Calu3 (cell line): ENCODE measurements at regions of chr1 and their contacts with region 1.

Region 1: GRCh38 chr1:112809253-112809684 is 94.1 kb upstream of the PPM1J start:
- DNase-seq: peak; percentile 82
- H3K4me3 Mint-ChIP-seq: no peak overlapping the region
- H3K27ac Mint-ChIP-seq: no peak overlapping the region
- H3K4me1 Mint-ChIP-seq: peaks cover 15% of the 10 kb centered on the region
- H3K27me3 Mint-ChIP-seq: no peaks in the 10 kb centered on the region
- CTCF ChIP-seq: peak; percentile 77

Region 2: DNA sequence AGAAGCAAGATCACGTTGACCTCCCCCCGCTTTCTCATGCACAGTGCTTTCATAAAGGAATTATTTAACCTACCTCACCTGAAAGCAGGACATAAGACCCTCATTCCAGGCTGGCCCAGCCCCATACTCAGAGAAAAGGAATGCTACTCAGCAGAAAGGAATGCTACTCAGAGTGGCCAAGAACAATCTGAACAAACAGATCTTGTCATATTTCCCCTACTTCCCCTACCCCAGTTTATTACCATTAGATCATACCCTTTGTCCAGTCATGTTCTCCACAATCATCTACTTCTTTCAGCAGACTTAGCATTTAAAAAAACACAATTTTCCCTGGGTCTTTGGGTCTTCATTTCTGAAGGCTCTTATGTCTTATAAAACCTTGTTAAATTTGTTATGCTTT is 56.9 kb after region 1 on chr1:
- CTCF ChIA-PET with region 1: no interaction called
- intact Hi-C with region 1: loop called (anchors 5 kb)
- DNase-seq: no peak
- H3K4me3 Mint-ChIP-seq: no peak overlapping the region
- H3K27ac Mint-ChIP-seq: peak overlapping the region; percentile 16
- H3K4me1 Mint-ChIP-seq: peaks cover 33% of the 10 kb centered on the region
- H3K27me3 Mint-ChIP-seq: no peaks in the 10 kb centered on the region
- CTCF ChIP-seq: no peak

Region 3: GRCh38 chr1:112955781-112956543 is 146.7 kb after region 1 on chr1 and contains the start of gene SLC16A1:
- CTCF ChIA-PET with region 1: no interaction called
- intact Hi-C with region 1: loop called (anchors 2 kb)
- DNase-seq: peak; percentile 87
- H3K4me3 Mint-ChIP-seq: peak within 1 kb of the TSS; percentile 100
- H3K27ac Mint-ChIP-seq: peak within 1 kb of the TSS; percentile 2
- H3K4me1 Mint-ChIP-seq: peaks cover 24% of the 10 kb centered on the region
- H3K27me3 Mint-ChIP-seq: no peaks in the 10 kb centered on the region
- CTCF ChIP-seq: no peak
- total RNA-seq, gene SLC16A1: 59.2 and 60.3 TPM in 2 replicates

Region 4: GRCh38 chr1:113072757-113073478 is 263.6 kb after region 1 on chr1 and contains the start of gene LRIG2:
- CTCF ChIA-PET with region 1: interaction called, 6 read pairs
- intact Hi-C with region 1: loop called (anchors 5 kb)
- DNase-seq: peak; percentile 96
- H3K4me3 Mint-ChIP-seq: peak within 1 kb of the TSS; percentile 87
- H3K27ac Mint-ChIP-seq: peak within 1 kb of the TSS; percentile 66
- H3K4me1 Mint-ChIP-seq: no peaks in the 10 kb centered on the region
- H3K27me3 Mint-ChIP-seq: no peaks in the 10 kb centered on the region
- CTCF ChIP-seq: peak; percentile 72
- total RNA-seq, gene LRIG2: 11.0 and 11.6 TPM in 2 replicates